CD14-positive monocyte (primary cell): ENCODE measurements at regions of chr1 and their contacts with region 1.

Region 1: GRCh38 chr1:18949686-18950400 is 6.6 kb downstream of the IFFO2 start:
- DNase-seq: peak; percentile 38 to 50 (median 46)
- H3K4me3 ChIP-seq: peak overlapping the region; percentile 55 to 79 (median 64)
- H3K4me3 Mint-ChIP-seq: peak overlapping the region; percentile 87 to 93
- H3K27ac ChIP-seq: peak overlapping the region; percentile 78 to 97
- H3K27ac Mint-ChIP-seq: peak overlapping the region; percentile 97 to 100 (median 99)
- H3K4me1 ChIP-seq: peaks cover 63 to 83% of the 10 kb centered on the region in 2 donors
- H3K4me1 Mint-ChIP-seq: peaks cover 86% of the 10 kb centered on the region
- H3K27me3 ChIP-seq: peaks cover 0 to 15% of the 10 kb centered on the region in 2 donors
- H3K27me3 Mint-ChIP-seq: peaks cover 8 to 15% (median 14%) of the 10 kb centered on the region in 3 donors
- CTCF ChIP-seq: peak; percentile 19

Region 2: GRCh38 chr1:18926315-18927081 is 23.3 kb before region 1 on chr1:
- intact Hi-C with region 1: loop called in 1 of 2 experiments (anchors 2 kb)
- DNase-seq: peak; percentile 92 to 96 (median 96)
- H3K4me3 ChIP-seq: peak overlapping the region in 2 of 3 experiments; percentile 4 to 62
- H3K4me3 Mint-ChIP-seq: peak overlapping the region; percentile 64 to 86
- H3K27ac ChIP-seq: peak overlapping the region; percentile 89 to 99
- H3K27ac Mint-ChIP-seq: peak overlapping the region; percentile 89 to 97 (median 95)
- H3K4me1 ChIP-seq: peaks cover 67 to 72% of the 10 kb centered on the region in 2 donors
- H3K4me1 Mint-ChIP-seq: peaks cover 74% of the 10 kb centered on the region
- H3K27me3 ChIP-seq: no peaks in the 10 kb centered on the region
- H3K27me3 Mint-ChIP-seq: peaks cover 3 to 7% (median 5%) of the 10 kb centered on the region in 3 donors
- CTCF ChIP-seq: no peak

Region 3: GRCh38 chr1:19123837-19124236 is 174.0 kb after region 1 on chr1:
- intact Hi-C with region 1: no loop called
- DNase-seq: no peak
- H3K4me3 ChIP-seq: no peak overlapping the region
- H3K4me3 Mint-ChIP-seq: no peak overlapping the region
- H3K27ac ChIP-seq: peak overlapping the region in 1 of 2 donors; percentile 43
- H3K27ac Mint-ChIP-seq: peak overlapping the region in 1 of 7 donors; percentile 55
- H3K4me1 ChIP-seq: peaks cover 4 to 15% of the 10 kb centered on the region in 2 donors
- H3K4me1 Mint-ChIP-seq: peaks cover 11% of the 10 kb centered on the region
- H3K27me3 ChIP-seq: no peaks in the 10 kb centered on the region
- H3K27me3 Mint-ChIP-seq: no peaks in the 10 kb centered on the region
- CTCF ChIP-seq: no peak